Head of caudate nucleus (tissue), 42 donors: ENCODE measurements at regions of chr1 and their contacts with region 1.

Region 1: DNA sequence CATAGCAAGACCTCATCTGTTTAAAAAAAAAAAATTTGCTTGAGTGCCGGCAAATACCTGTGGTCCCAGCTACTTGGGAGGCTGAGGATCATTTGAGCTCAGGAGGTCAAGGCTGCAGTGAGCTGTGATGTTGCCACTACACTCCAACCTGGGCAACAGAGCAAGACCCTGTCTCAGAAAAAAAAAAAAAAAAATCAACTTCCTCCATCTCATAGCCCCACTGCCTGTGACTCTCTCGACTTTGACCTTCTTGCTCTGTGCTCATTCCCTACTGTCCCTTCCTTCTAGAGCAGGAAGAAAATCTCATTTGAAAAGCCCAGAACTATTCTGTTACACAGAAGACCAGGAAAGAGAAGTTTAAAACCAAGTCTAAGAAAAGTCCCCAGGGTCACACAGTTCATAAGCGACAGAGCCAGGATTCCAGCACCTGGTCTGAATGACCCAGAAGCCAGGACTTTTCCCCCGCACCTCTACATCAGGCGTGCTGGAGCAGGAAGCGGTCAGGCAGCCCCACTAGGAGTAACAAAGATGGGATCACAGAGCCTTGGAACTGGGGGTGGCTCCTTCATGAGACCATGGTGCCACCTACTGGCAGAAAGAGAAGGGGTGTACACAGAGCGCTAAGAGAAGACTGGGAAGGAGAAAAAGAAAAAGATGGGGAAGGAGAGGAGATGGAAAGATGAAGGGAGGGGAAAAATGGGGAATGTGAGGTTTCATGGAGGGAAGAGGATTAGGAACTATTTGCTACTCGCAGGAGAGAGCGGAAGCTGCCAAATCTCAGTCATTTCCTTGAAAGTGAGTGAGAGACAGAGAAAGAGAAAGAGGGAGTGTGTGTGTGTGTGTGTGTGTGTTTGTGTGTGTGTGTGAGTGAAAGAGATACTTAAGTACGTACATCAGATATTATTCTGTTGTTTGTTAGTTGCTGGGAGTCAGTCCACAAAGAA is 3.1 kb upstream of the P3R3URF start:
- DNase-seq: peak; percentile 63 to 95 (median 84)

Region 2: GRCh38 chr1:46036894-46037839 is 142.2 kb before region 1 on chr1:
- intact Hi-C with region 1: loop called (anchors 2 kb)
- DNase-seq: peak; percentile 63 to 95 (median 90)

Region 3: DNA sequence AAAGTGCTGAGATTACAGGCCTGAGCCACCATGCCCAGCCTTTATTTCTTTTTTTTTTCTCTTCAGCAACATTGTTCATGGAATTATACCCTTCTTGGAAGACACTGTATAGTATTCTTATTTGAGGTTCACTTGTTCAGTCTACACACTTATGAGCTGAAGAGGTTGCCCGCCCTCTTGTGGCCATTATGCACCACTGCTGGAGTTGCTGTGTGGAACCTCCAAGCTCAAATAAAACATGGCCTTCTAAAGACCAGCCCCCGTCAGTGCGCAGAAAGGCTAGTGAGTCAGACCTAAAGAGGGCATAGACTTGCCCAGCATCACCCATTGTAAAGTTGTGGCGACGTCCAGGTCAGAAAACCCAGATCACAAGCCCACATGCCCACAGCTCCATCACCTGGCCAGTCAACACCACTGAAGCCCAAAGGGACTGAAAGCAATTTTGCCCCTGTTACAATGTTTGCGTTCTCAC is 44.1 kb after region 1 on chr1:
- intact Hi-C with region 1: loop called (anchors 2 kb)
- DNase-seq: peak; percentile 54 to 93 (median 80)